ENCODE measurements at regions of chr17 and their contacts with region 1.

Region 1: GRCh38 chr17:39209317-39210092 is 9.4 kb downstream of the RPL19 start:
- DNase-seq: no peak
- H3K4me3 ChIP-seq: no peak overlapping the region
- H3K4me3 Mint-ChIP-seq: no peak overlapping the region
- H3K27ac Mint-ChIP-seq: no peak overlapping the region
- H3K4me1 ChIP-seq: no peaks in the 10 kb centered on the region
- H3K4me1 Mint-ChIP-seq: no peaks in the 10 kb centered on the region
- H3K27me3 ChIP-seq: no peaks in the 10 kb centered on the region
- H3K27me3 Mint-ChIP-seq: peaks cover 5% of the 10 kb centered on the region
- CTCF ChIP-seq: no peak

Region 2: GRCh38 chr17:39235555-39236449 is 26.3 kb after region 1 on chr17:
- CTCF ChIA-PET with region 1: interaction called, 15 read pairs
- POLR2A ChIA-PET with region 1: no interaction called
- intact Hi-C with region 1: loop called (anchors 1 kb)
- DNase-seq: peak; percentile 61 to 63
- H3K4me3 ChIP-seq: no peak overlapping the region
- H3K4me3 Mint-ChIP-seq: no peak overlapping the region
- H3K27ac Mint-ChIP-seq: no peak overlapping the region
- H3K4me1 ChIP-seq: no peaks in the 10 kb centered on the region
- H3K4me1 Mint-ChIP-seq: no peaks in the 10 kb centered on the region
- H3K27me3 ChIP-seq: no peaks in the 10 kb centered on the region
- H3K27me3 Mint-ChIP-seq: peaks cover 3% of the 10 kb centered on the region
- CTCF ChIP-seq: peak; percentile 76 to 89

Region 3: DNA sequence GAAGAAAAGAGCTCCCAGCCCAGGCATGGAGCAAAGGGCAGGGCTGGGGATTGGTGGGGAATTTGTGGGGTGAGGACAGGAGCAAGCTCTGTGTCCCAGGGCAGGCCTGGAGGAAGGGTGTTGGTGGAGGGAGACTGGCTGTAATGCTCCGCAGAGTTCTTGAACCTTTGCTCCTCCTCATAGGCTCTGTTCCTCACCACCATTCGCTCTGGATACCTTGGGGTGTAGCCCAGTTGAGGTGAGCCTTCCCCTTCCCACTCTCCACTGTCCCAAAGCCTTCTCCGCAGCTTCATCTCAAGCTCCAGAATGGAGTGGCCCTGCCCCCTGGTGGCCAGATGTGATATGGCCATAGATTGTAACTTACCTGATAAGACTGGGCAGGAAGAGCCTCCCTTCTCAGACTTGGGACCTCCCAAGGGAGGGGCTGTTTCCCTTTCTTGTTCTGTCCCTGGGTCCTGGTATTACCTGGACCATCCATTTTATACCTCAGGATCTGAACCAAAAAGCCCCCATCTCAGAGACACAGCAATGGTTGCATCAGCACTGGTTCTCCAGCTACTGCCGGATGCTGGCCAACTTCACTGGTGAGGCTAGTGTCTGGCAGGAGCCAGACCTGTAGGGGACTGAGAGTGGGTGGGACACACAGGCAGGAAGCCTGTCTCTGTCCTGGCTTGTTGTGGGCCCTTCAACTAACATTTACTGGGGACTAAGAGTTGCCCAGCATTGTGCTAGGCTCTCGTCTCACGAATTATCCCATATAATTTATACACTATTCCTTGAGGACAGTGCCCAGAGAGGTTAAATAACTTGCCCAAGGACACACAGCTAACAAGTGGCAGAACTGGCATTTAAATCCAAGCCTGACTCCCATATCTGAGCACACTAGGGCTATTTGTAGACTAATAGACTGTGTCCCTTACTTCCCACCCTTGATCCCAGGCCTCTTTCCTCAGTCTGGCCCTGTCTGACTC is 35.4 kb after region 1 on chr17:
- CTCF ChIA-PET with region 1: interaction called, 123 read pairs
- POLR2A ChIA-PET with region 1: interaction called, 4 read pairs
- intact Hi-C with region 1: loop called (anchors 1 kb)
- DNase-seq: peak; percentile 86 to 92
- H3K4me3 ChIP-seq: no peak overlapping the region
- H3K4me3 Mint-ChIP-seq: no peak overlapping the region
- H3K27ac Mint-ChIP-seq: no peak overlapping the region
- H3K4me1 ChIP-seq: no peaks in the 10 kb centered on the region
- H3K4me1 Mint-ChIP-seq: no peaks in the 10 kb centered on the region
- H3K27me3 ChIP-seq: no peaks in the 10 kb centered on the region
- H3K27me3 Mint-ChIP-seq: no peaks in the 10 kb centered on the region
- CTCF ChIP-seq: peak; percentile 94 to 96

Region 4: GRCh38 chr17:39401412-39402243 is 192.1 kb after region 1 on chr17 and contains the start of gene FBXL20:
- CTCF ChIA-PET with region 1: interaction called, 3 read pairs
- POLR2A ChIA-PET with region 1: no interaction called
- intact Hi-C with region 1: loop called (anchors 1 kb)
- DNase-seq: peak; percentile 93
- H3K4me3 ChIP-seq: peak within 1 kb of the TSS; percentile 100
- H3K4me3 Mint-ChIP-seq: peak within 1 kb of the TSS; percentile 99
- H3K27ac Mint-ChIP-seq: peak within 1 kb of the TSS; percentile 81
- H3K4me1 ChIP-seq: peaks cover 10% of the 10 kb centered on the region; the same call in 1 of the 2 replicates
- H3K4me1 Mint-ChIP-seq: peaks cover 12% of the 10 kb centered on the region
- H3K27me3 ChIP-seq: no peaks in the 10 kb centered on the region
- H3K27me3 Mint-ChIP-seq: no peaks in the 10 kb centered on the region
- CTCF ChIP-seq: no peak
- total RNA-seq, gene FBXL20: 11.2 and 12.6 TPM in 2 replicates

Region 5: GRCh38 chr17:39547713-39548478 is 338.4 kb after region 1 on chr17:
- CTCF ChIA-PET with region 1: interaction called, 13 read pairs
- POLR2A ChIA-PET with region 1: no interaction called
- intact Hi-C with region 1: loop called (anchors 5 kb)
- DNase-seq: peak; percentile 57 to 77
- H3K4me3 ChIP-seq: no peak overlapping the region
- H3K4me3 Mint-ChIP-seq: no peak overlapping the region
- H3K27ac Mint-ChIP-seq: no peak overlapping the region
- H3K4me1 ChIP-seq: no peaks in the 10 kb centered on the region
- H3K4me1 Mint-ChIP-seq: no peaks in the 10 kb centered on the region
- H3K27me3 ChIP-seq: no peaks in the 10 kb centered on the region
- H3K27me3 Mint-ChIP-seq: no peaks in the 10 kb centered on the region
- CTCF ChIP-seq: peak; percentile 90 to 98

Region 6: DNA sequence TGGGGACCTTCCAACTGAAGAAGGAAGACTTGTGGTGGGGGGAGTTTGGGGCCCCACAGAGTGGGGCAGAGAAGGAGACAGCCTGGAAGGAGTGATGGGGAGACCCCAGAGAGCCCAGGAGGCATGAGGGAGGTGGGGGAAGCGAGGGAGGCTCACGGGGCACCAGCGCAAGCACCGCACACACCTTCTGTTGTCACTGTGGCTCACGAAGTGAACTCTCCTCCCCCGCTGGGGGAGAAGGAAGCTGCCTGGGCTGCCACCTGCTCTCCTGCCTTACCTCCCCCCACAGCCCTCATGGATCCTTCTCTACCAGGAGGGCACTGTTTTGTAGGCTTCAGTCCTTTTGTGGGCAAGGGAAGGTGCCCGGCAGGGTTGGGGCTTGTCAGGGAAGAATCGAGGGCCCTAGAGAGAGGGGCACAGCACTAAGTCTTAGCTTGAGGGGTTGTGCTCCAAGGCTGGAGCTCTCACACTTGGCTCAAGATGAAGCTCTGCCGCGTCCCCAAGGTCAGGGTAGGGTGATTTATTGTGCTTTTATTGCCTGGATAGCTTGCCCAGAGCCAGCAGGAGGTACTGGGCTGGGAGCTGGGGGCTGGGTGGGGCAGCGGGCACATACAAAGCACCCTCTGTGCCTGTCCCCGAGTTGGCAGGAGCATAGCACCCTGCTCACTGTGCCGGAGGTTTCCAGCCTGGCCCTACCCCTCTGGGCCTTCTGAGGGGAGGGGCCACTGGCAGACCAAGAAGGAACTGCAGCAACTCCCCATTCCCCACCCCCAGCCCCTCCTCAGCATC is 422.8 kb after region 1 on chr17:
- CTCF ChIA-PET with region 1: no interaction called
- POLR2A ChIA-PET with region 1: no interaction called
- intact Hi-C with region 1: no loop called
- DNase-seq: no peak
- H3K4me3 ChIP-seq: no peak overlapping the region
- H3K4me3 Mint-ChIP-seq: no peak overlapping the region
- H3K27ac Mint-ChIP-seq: no peak overlapping the region
- H3K4me1 ChIP-seq: peaks cover 5% of the 10 kb centered on the region
- H3K4me1 Mint-ChIP-seq: peaks cover 12% of the 10 kb centered on the region
- H3K27me3 ChIP-seq: no peaks in the 10 kb centered on the region
- H3K27me3 Mint-ChIP-seq: no peaks in the 10 kb centered on the region
- CTCF ChIP-seq: no peak

Measured in Caco-2 (cell line).